Heart right ventricle (tissue), 16 donors: ENCODE measurements at regions of chr7 and their contacts with region 1.

Region 1: DNA sequence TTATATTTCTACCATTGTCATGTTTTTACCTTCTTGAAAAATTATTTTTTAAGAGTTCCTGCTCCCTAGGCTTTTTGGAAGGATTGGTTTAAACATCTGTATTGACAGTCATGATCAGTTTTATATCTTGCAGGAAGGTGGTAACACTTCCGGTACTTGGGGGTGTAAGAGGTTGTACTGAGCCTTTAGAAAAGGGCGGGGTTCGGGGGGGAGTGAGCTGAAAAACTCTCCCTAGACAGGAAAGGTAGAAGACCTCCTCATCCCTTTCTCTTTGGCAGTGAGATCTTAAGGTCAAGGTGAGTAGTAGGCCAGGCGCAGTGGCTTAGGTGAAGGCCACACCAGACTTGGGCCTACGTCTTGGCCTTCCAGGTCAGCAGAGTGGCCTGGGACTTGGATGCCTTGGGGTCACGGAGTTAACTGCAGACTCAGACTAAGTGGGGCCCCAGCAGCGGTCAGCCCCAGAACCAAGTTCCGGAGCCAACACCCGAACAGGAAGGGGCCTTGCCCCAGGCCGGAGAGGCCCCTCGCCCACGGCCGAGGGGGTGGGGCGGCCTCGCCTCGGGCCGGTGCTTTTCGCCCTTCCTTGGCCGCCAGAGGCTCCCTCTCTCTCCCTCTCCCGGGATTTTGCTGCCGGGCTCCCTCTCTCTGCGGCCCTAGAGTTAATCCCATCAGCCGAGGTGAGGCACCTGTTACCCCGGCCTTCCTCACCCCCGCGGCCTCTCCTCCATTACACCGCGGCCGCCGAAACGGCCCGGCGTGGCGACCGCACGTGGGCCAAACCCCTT is at the start of gene PPP1R9A:
- DNase-seq: peak; percentile 37 to 45
- ATAC-seq: peak; percentile 63 to 91 (median 84)
- H3K4me3 ChIP-seq: peak within 1 kb of the TSS; percentile 11 to 70 (median 60)
- H3K27ac ChIP-seq: peak within 1 kb of the TSS; percentile 26 to 83 (median 72)
- H3K4me1 ChIP-seq: peaks cover 0 to 17% (median 10%) of the 10 kb centered on the region in 9 donors
- H3K27me3 ChIP-seq: peaks cover 0 to 41% (median 5%) of the 10 kb centered on the region in 7 donors
- CTCF ChIP-seq: peak in 8 of 9 donors; percentile 9 to 59 (median 32)
- total RNA-seq, gene PPP1R9A: 19.1 to 41.9 (median 33.3) TPM

Region 2: GRCh38 chr7:94823952-94824351 is 83.3 kb before region 1 on chr7:
- intact Hi-C with region 1: no loop called
- DNase-seq: no peak
- ATAC-seq: no peak
- H3K4me3 ChIP-seq: no peak overlapping the region
- H3K27ac ChIP-seq: no peak overlapping the region
- H3K4me1 ChIP-seq: no peaks in the 10 kb centered on the region
- H3K27me3 ChIP-seq: no peaks in the 10 kb centered on the region
- CTCF ChIP-seq: no peak

Region 3: GRCh38 chr7:94969434-94970084 is 62.3 kb after region 1 on chr7:
- intact Hi-C with region 1: loop called in 1 of 10 experiments (anchors 10 kb)
- DNase-seq: no peak
- ATAC-seq: no peak
- H3K4me3 ChIP-seq: no peak overlapping the region
- H3K27ac ChIP-seq: no peak overlapping the region
- H3K4me1 ChIP-seq: peaks cover 0 to 20% (median 5%) of the 10 kb centered on the region in 9 donors
- H3K27me3 ChIP-seq: no peaks in the 10 kb centered on the region
- CTCF ChIP-seq: no peak